Right cardiac atrium (tissue), 5 donors: ENCODE measurements at regions of chr10 and their contacts with region 1.

Region 1: DNA sequence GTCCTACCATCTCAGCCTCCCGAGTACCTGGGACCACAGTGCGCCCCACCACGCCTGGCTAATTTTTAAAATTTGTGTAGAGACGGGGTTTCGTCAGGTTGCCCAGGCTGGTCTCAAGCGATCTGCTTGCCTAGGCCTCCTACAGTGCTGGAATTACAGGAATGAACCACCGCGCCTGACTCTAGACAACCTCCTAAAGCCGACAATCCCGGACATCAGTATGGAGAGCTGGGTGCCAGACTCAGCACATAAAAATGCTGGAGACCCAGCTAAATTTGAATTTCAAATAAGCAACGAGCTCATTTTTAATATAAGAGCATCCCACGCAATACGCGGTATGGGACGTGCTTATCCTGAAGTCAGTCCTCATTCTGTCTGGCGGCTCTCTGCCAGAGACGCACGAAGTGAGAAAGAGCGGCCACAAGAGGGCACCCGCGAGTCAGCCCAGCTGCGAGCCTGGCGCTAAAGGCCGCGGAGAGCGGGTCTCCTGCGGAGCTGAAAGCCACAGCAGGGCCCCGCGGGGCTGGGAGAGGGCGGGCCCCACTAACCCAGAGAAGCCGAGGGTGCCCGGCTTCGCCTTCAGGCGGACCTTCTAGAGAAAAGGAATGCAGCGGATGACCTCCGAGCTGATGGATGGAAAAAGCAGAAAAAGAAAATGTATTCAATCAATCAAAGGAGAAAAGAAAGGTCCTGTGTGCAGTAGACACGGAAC is 7.0 kb downstream of the CALY start:
- DNase-seq: peak; percentile 87 to 95 (median 92)
- ATAC-seq: peak; percentile 76 to 83
- H3K4me3 ChIP-seq: no peak overlapping the region
- H3K27ac ChIP-seq: no peak overlapping the region
- H3K4me1 ChIP-seq: no peaks in the 10 kb centered on the region
- H3K27me3 ChIP-seq: no peaks in the 10 kb centered on the region

Region 2: DNA sequence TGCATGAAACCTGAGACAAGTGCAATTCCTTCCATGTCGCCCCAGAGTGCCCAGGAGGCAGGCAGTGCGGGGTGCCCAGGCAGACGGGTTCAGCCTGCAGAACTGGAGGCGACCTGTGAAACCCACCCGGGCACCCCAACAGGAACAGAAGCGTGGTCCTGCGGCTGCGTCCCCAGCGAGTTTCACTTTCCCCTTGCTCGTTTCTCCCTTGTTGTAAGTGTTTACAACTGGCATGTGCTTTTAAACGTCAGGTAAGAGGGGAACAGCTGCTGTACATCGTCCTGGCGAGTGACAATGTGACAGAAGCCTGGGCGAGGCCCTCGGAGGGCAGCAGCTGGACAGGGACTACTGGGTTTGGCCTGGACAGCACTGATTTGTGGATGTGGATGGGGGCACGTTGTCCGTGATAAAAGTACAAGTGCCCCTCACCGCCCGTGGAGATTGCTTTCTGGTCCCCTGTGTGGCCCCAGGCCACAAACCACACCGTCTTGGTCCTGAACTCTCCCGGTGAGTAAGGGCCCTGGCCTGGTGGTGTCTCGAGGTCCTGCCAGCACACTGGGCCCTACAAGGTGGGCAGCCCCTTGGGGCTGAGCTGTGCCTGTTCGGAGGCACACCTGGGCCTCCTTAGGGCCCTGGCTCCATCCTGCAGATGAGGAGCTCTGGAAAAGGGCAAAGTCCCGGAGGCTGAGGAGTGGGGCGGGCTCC is 88.0 kb before region 1 on chr10:
- intact Hi-C with region 1: no loop called
- DNase-seq: peak in 2 of 3 donors; percentile 35 to 39
- ATAC-seq: no peak
- H3K4me3 ChIP-seq: no peak overlapping the region
- H3K27ac ChIP-seq: no peak overlapping the region
- H3K4me1 ChIP-seq: no peaks in the 10 kb centered on the region
- H3K27me3 ChIP-seq: no peaks in the 10 kb centered on the region

Region 3: GRCh38 chr10:133520155-133520738 is 190.6 kb after region 1 on chr10:
- intact Hi-C with region 1: loop called in 1 of 4 experiments (anchors 10 kb)
- DNase-seq: peak; percentile 82 to 92 (median 92)
- ATAC-seq: peak; percentile 98 to 99
- H3K4me3 ChIP-seq: peak overlapping the region; percentile 30
- H3K27ac ChIP-seq: no peak overlapping the region
- H3K4me1 ChIP-seq: no peaks in the 10 kb centered on the region
- H3K27me3 ChIP-seq: no peaks in the 10 kb centered on the region

Region 4: GRCh38 chr10:133608855-133609254 is 279.2 kb after region 1 on chr10:
- intact Hi-C with region 1: loop called in 1 of 4 experiments (anchors 5 kb)
- DNase-seq: no peak
- ATAC-seq: no peak
- H3K4me3 ChIP-seq: no peak overlapping the region
- H3K27ac ChIP-seq: no peak overlapping the region
- H3K4me1 ChIP-seq: no peaks in the 10 kb centered on the region
- H3K27me3 ChIP-seq: peaks cover 3% of the 10 kb centered on the region